Pancreas (tissue), 10 donors: ENCODE measurements at regions of chr1 and their contacts with region 1.

Region 1: GRCh38 chr1:170789063-170789462 is 125.1 kb downstream of the PRRX1 start:
- DNase-seq: no peak
- ATAC-seq: no peak
- H3K4me3 ChIP-seq: no peak overlapping the region
- H3K27ac ChIP-seq: no peak overlapping the region
- H3K4me1 ChIP-seq: no peaks in the 10 kb centered on the region
- H3K27me3 ChIP-seq: no peaks in the 10 kb centered on the region
- CTCF ChIP-seq: no peak

Region 2: GRCh38 chr1:170562646-170563338 is 226.3 kb before region 1 on chr1:
- intact Hi-C with region 1: no loop called
- DNase-seq: peak in 3 of 6 donors; percentile 18 to 45 (median 22)
- ATAC-seq: peak in 3 of 4 donors; percentile 77 to 95 (median 95)
- H3K4me3 ChIP-seq: no peak overlapping the region
- H3K27ac ChIP-seq: peak overlapping the region in 2 of 4 donors; percentile 71
- H3K4me1 ChIP-seq: peaks cover 0 to 3% (median 0%) of the 10 kb centered on the region in 3 donors
- H3K27me3 ChIP-seq: no peaks in the 10 kb centered on the region
- CTCF ChIP-seq: no peak

Region 3: GRCh38 chr1:170840371-170840770 is 51.3 kb after region 1 on chr1:
- intact Hi-C with region 1: loop called in 1 of 3 experiments (anchors 10 kb)
- DNase-seq: no peak
- ATAC-seq: no peak
- H3K4me3 ChIP-seq: no peak overlapping the region
- H3K27ac ChIP-seq: no peak overlapping the region
- H3K4me1 ChIP-seq: no peaks in the 10 kb centered on the region
- H3K27me3 ChIP-seq: no peaks in the 10 kb centered on the region
- CTCF ChIP-seq: no peak

Region 4: DNA sequence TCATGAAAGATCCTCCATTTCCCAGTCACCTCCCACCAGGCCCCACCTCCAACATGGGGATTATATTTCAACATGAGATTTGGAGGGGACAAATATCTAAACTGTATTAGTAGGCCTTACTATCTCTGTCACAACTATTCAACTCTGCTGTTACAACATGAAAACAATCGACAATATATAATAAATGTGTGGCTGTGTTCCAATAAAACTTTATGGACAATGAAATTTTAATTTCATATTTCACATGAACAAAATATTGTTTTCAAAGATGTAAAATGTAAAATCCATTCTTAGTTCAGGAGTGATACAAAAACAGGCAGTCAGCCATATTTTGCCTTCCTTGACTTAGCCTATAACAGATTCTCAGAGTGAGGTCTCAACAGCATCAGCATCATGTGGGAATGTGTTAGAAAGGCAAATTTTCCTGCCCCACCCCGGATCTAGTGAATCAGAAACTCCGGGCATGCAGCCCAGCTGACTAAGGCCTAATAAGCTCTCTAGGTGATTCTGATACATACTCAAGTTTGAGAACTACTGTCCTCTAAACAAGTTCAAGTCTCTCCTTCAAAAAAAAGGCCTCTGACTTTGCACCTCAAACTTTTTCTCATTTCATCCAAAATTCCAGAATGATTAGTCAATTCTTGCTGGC is 649.3 kb after region 1 on chr1:
- intact Hi-C with region 1: no loop called
- DNase-seq: peak in 1 of 6 donors; percentile 15
- ATAC-seq: peak in 3 of 4 donors; percentile 21 to 58 (median 40)
- H3K4me3 ChIP-seq: no peak overlapping the region
- H3K27ac ChIP-seq: no peak overlapping the region
- H3K4me1 ChIP-seq: no peaks in the 10 kb centered on the region
- H3K27me3 ChIP-seq: no peaks in the 10 kb centered on the region
- CTCF ChIP-seq: no peak